H1 (cell line): ENCODE measurements at regions of chr7 and their contacts with region 1.

Region 1: GRCh38 chr7:143385891-143386781 is 5.0 kb downstream of the ZYX start:
- DNase-seq: no peak
- H3K4me3 ChIP-seq: no peak overlapping the region
- H3K27ac ChIP-seq: peak overlapping the region; percentile 22; the same call in 1 of the 2 replicates
- H3K4me1 ChIP-seq: peaks cover 2 to 18% (median 4%) of the 10 kb centered on the region in 4 experiments; a peak in 6 of 7 replicates
- H3K27me3 ChIP-seq: no peaks in the 10 kb centered on the region
- CTCF ChIP-seq: no peak
- EP300 ChIP-seq: no peak
- POLR2A ChIP-seq: no peak; a peak in 1 of 3 replicates
- RAD21 ChIP-seq: no peak

Region 2: DNA sequence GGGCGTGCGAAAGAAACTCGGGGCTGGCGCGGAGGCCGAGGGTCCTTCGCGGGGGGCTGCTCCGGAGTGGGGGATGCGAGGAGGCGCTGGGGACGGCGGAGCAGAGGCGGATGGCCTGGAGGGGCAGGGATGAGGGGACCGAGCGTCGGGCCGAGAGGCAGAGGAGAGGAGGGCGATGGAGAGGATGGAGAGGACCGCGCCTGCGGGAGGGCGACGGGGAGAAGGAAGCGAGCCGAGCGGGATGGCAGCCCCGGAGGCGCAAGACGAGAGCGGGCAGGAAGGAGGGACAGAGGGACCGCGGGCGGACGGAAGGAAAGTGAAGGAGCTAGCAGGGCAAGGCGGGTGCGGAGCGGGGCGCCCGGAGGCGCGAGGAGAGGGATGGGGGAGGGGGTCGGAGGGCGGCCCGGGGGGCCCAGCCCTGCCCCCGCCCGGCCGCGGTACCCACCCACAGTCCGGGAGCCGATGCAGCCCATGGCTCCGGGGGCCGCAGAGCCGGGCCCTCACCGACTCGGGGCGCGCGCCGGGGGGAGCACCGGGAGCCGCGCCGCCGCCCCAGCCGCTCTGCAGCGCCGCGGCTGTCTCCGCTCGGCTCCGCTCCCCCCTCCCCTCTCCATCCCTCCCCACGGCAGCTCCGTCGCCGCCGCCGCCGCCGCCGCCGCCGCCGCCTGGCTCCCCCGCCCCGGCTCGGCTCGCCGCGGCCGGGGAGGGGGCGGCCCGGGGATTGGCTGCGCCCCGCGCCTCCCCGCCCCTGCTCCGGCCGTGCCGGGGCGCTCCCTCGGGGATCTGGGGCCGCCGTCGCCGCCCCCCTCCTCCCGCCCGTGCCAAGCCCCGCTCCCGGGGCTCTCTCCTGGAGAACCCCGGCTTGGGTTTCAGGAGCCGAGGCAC is 23.8 kb before region 1 on chr7 and contains the start of gene FAM131B:
- CTCF ChIA-PET with region 1: interaction called, 25 read pairs
- POLR2A ChIA-PET with region 1: interaction called, 233 read pairs
- DNase-seq: peak in 1 of 2 experiments; percentile 76
- H3K4me3 ChIP-seq: peak within 1 kb of the TSS; percentile 80 to 98 (median 80)
- H3K27ac ChIP-seq: no peak within 1 kb of the TSS
- H3K4me1 ChIP-seq: peaks cover 4 to 12% (median 10%) of the 10 kb centered on the region in 4 experiments
- H3K27me3 ChIP-seq: peaks cover 0 to 13% (median 8%) of the 10 kb centered on the region in 4 experiments; a peak in 4 of 7 replicates
- CTCF ChIP-seq: no peak
- EP300 ChIP-seq: no peak
- POLR2A ChIP-seq: no peak
- RAD21 ChIP-seq: no peak
- total RNA-seq, gene FAM131B: 35.5 and 38.2 TPM in 2 replicates

Region 3: GRCh38 chr7:143396625-143397556 is 10.8 kb after region 1 on chr7:
- CTCF ChIA-PET with region 1: interaction called, 359 read pairs
- POLR2A ChIA-PET with region 1: interaction called, 518 read pairs
- DNase-seq: no peak
- H3K4me3 ChIP-seq: no peak overlapping the region
- H3K27ac ChIP-seq: no peak overlapping the region
- H3K4me1 ChIP-seq: no peaks in the 10 kb centered on the region
- H3K27me3 ChIP-seq: no peaks in the 10 kb centered on the region
- CTCF ChIP-seq: no peak
- EP300 ChIP-seq: no peak
- POLR2A ChIP-seq: no peak
- RAD21 ChIP-seq: no peak